CD4-positive, alpha-beta memory T cell (primary cell): ENCODE measurements at regions of chr16 and their contacts with region 1.

Region 1: GRCh38 chr16:56643080-56643778 is 4.8 kb downstream of the MT1A start:
- DNase-seq: peak; percentile 63 to 76 (median 71)
- H3K4me3 ChIP-seq: peak overlapping the region in 1 of 2 donors; percentile 0
- H3K4me3 Mint-ChIP-seq: peak overlapping the region; percentile 75 to 84 (median 79)
- H3K27ac ChIP-seq: no peak overlapping the region
- H3K27ac Mint-ChIP-seq: peak overlapping the region in 5 of 7 donors; percentile 63 to 77 (median 67)
- H3K4me1 ChIP-seq: peaks cover 16% of the 10 kb centered on the region
- H3K4me1 Mint-ChIP-seq: peaks cover 18 to 22% (median 19%) of the 10 kb centered on the region in 4 donors
- H3K27me3 ChIP-seq: peaks cover 14% of the 10 kb centered on the region
- H3K27me3 Mint-ChIP-seq: peaks cover 12 to 23% of the 10 kb centered on the region in 2 donors

Region 2: GRCh38 chr16:56657555-56658326 is 14.5 kb after region 1 on chr16 and contains the start of gene MT1F:
- CTCF ChIA-PET with region 1: interaction called, 4 read pairs
- POLR2A ChIA-PET with region 1: interaction called, 3 read pairs
- intact Hi-C with region 1: loop called (anchors 2 kb)
- DNase-seq: peak; percentile 40 to 78 (median 53)
- H3K4me3 ChIP-seq: peak within 1 kb of the TSS; percentile 62 to 65
- H3K4me3 Mint-ChIP-seq: peak within 1 kb of the TSS; percentile 90 to 99 (median 96)
- H3K27ac ChIP-seq: peak within 1 kb of the TSS; percentile 39
- H3K27ac Mint-ChIP-seq: peak within 1 kb of the TSS; percentile 79 to 97 (median 93)
- H3K4me1 ChIP-seq: peaks cover 17% of the 10 kb centered on the region
- H3K4me1 Mint-ChIP-seq: peaks cover 16 to 35% (median 24%) of the 10 kb centered on the region in 4 donors
- H3K27me3 ChIP-seq: no peaks in the 10 kb centered on the region
- H3K27me3 Mint-ChIP-seq: peaks cover 2 to 4% of the 10 kb centered on the region in 2 donors
- total RNA-seq, gene MT1F: 8.3 to 12.9 TPM